ENCODE measurements at regions of chr11 and their contacts with region 1.

Region 1: DNA sequence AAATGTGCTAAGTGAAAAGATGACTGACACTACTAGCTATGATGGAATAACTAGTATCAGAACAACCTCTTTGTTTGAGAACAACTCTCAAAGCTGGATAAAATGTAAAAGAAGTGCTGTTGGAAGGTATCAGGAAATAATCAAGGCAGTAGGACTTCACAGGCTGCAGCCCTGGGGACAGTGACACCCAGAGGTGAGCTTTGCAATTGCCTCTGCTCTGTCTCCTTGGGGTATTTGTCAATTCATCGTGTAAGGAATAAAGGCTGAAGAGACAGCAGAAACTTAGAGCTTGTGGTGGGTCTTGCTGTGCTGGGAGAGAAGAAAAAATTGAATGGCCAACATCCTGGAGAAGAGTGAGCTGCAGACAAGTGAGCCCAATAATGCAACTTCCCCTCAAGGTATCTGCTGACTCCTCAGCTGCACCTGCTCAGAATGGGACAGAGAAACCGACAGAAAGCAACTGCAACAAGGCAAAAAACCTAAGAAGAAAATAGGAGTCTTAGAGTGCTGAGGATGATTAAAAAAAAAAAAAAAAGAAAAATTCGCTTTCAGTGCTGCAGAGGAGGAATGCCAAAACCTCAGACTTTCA is 141.1 kb downstream of the RCN1 start:
- DNase-seq: no peak
- ATAC-seq: no peak

Region 2: GRCh38 chr11:32658639-32659406 is 426.8 kb after region 1 on chr11:
- intact Hi-C with region 1: loop called (anchors 5 kb)
- DNase-seq: no peak
- ATAC-seq: no peak